ENCODE measurements at regions of chr4 and their contacts with region 1.

Region 1: GRCh38 chr4:41644288-41644914 is 104.1 kb downstream of the PHOX2B start:
- DNase-seq: peak; percentile 67 to 99
- H3K4me3 ChIP-seq: peak overlapping the region in 1 of 4 experiments; percentile 49; a peak in 4 of 8 replicates
- H3K27ac ChIP-seq: no peak overlapping the region
- H3K4me1 ChIP-seq: peaks cover under 1 to 8% (median 4%) of the 10 kb centered on the region in 4 experiments; a peak in 5 of 7 replicates
- H3K27me3 ChIP-seq: peaks cover 0 to 8% (median 4%) of the 10 kb centered on the region in 4 experiments; a peak in 3 of 7 replicates
- CTCF ChIP-seq: peak; percentile 91 to 98 (median 94)
- EP300 ChIP-seq: peak in 1 of 2 experiments; percentile 76; a peak in 1 of 3 replicates
- POLR2A ChIP-seq: no peak
- RAD21 ChIP-seq: peak; percentile 95 to 96

Region 2: GRCh38 chr4:41281038-41281634 is 363.3 kb before region 1 on chr4:
- CTCF ChIA-PET with region 1: interaction called, 38 read pairs
- POLR2A ChIA-PET with region 1: no interaction called
- DNase-seq: no peak
- H3K4me3 ChIP-seq: no peak overlapping the region
- H3K27ac ChIP-seq: no peak overlapping the region
- H3K4me1 ChIP-seq: no peaks in the 10 kb centered on the region
- H3K27me3 ChIP-seq: no peaks in the 10 kb centered on the region
- CTCF ChIP-seq: peak in 2 of 3 experiments; percentile 84 to 91; a peak in 3 of 4 replicates
- EP300 ChIP-seq: no peak
- POLR2A ChIP-seq: no peak
- RAD21 ChIP-seq: peak; percentile 100

Region 3: DNA sequence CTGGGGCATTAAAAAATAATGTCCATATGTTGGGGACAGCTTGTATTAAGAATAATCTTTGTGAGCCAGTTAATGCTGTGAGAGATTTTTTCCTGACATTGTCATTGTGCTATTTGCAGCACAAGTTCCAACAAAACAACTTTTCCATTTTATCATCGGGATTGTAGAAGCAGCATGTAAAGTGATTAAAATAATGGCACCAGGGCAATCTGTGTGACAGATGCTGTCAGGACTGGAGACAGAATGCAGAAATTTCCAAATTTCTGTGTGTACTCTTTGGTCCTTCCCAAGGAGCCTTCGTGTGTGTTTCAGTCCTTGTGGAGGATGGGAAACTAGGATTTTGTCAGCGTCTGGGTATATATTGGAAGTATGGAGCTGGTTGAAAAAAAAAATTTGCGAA is 208.0 kb before region 1 on chr4:
- CTCF ChIA-PET with region 1: interaction called, 10 read pairs
- POLR2A ChIA-PET with region 1: no interaction called
- DNase-seq: no peak
- H3K4me3 ChIP-seq: no peak overlapping the region
- H3K27ac ChIP-seq: no peak overlapping the region
- H3K4me1 ChIP-seq: peaks cover 2 to 23% (median 8%) of the 10 kb centered on the region in 4 experiments
- H3K27me3 ChIP-seq: no peaks in the 10 kb centered on the region
- CTCF ChIP-seq: no peak
- EP300 ChIP-seq: no peak
- POLR2A ChIP-seq: no peak
- RAD21 ChIP-seq: no peak

Region 4: DNA sequence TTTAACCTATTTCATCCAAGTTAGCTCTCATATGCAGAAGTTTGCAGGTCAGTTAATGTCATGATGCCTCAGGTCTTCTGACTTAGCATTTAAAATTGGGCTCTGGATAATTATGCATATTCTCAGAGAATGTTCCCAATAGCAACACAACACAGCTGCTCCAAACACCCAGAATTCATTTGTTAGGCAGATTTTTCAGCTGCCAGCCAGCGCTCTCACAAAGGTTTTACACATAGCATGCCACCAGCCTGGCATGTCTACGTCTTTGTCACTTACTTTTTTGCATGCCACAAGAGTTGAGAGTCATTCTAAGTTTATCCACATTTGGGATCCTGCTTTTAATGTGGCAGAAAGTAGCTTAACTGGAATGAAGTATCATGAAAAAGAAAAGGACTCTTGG is 21.6 kb before region 1 on chr4:
- CTCF ChIA-PET with region 1: interaction called, 19 read pairs
- POLR2A ChIA-PET with region 1: no interaction called
- DNase-seq: no peak
- H3K4me3 ChIP-seq: no peak overlapping the region
- H3K27ac ChIP-seq: no peak overlapping the region
- H3K4me1 ChIP-seq: peaks cover 7 to 17% (median 14%) of the 10 kb centered on the region in 4 experiments
- H3K27me3 ChIP-seq: no peaks in the 10 kb centered on the region
- CTCF ChIP-seq: no peak
- EP300 ChIP-seq: peak in 1 of 2 experiments; percentile 49; a peak in 1 of 3 replicates
- POLR2A ChIP-seq: no peak
- RAD21 ChIP-seq: no peak

Region 5: GRCh38 chr4:41661442-41662076 is 17.2 kb after region 1 on chr4:
- CTCF ChIA-PET with region 1: interaction called, 28 read pairs
- POLR2A ChIA-PET with region 1: no interaction called
- DNase-seq: peak in 1 of 2 experiments; percentile 78
- H3K4me3 ChIP-seq: no peak overlapping the region
- H3K27ac ChIP-seq: no peak overlapping the region
- H3K4me1 ChIP-seq: no peaks in the 10 kb centered on the region
- H3K27me3 ChIP-seq: no peaks in the 10 kb centered on the region
- CTCF ChIP-seq: peak; percentile 74 to 85 (median 80)
- EP300 ChIP-seq: no peak
- POLR2A ChIP-seq: no peak
- RAD21 ChIP-seq: peak; percentile 91 to 92

Measured in H1 (cell line).